ENCODE measurements at regions of chr3 and their contacts with region 1.

Region 1: DNA sequence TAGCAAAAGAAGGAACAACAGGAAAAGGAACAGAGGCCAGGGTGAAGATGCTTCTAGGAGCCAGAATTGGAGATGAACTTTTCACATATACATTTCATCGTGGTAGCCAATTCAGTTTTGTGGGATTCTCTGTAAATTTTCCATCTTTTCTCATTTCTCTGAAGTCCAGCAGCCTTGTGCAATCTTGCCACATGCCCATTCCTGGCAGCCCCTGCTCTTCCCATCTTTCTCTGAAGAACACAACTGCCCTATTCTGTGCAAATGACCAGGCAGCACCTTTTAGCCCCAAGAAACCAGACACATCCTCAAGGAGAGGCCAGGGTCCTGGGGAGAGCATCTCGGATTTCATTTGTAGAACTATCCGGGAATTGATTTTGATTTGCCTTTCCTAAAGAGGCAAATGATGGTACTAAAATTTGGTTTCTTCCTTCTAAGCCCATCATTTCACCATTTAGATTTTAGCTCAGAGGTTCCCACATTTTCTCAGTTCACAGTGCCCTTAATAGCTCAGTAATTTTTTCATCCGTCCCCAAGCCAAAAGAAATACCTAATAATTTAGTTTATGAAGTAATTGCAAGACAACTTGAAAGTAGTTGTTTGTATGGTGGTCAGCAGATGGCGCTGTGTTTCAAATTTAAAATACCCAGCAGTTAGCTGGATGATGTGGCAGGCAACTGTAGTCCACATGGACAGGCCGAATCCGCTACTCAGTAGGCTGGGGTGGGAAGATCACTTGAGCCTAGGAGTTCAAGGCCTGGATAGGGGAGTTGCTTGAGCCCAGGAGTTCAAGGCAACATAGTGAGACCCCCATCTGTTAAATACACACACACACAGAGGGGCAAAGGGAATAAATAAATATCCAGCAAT is 61.3 kb upstream of the ACKR4 start:
- DNase-seq: peak; percentile 80
- ATAC-seq: peak; percentile 64
- H3K4me3 Mint-ChIP-seq: no peak overlapping the region
- H3K27ac Mint-ChIP-seq: peak overlapping the region; percentile 81
- H3K4me1 Mint-ChIP-seq: peaks cover 13% of the 10 kb centered on the region
- H3K27me3 Mint-ChIP-seq: no peaks in the 10 kb centered on the region
- CTCF ChIP-seq: peak; percentile 71

Region 2: GRCh38 chr3:132522353-132522752 is 13.5 kb before region 1 on chr3:
- CTCF ChIA-PET with region 1: interaction called, 22 read pairs
- POLR2A ChIA-PET with region 1: no interaction called
- intact Hi-C with region 1: no loop called
- DNase-seq: no peak
- ATAC-seq: peak; percentile 67
- H3K4me3 Mint-ChIP-seq: no peak overlapping the region
- H3K27ac Mint-ChIP-seq: no peak overlapping the region
- H3K4me1 Mint-ChIP-seq: peaks cover 20% of the 10 kb centered on the region
- H3K27me3 Mint-ChIP-seq: no peaks in the 10 kb centered on the region
- CTCF ChIP-seq: no peak

Region 3: DNA sequence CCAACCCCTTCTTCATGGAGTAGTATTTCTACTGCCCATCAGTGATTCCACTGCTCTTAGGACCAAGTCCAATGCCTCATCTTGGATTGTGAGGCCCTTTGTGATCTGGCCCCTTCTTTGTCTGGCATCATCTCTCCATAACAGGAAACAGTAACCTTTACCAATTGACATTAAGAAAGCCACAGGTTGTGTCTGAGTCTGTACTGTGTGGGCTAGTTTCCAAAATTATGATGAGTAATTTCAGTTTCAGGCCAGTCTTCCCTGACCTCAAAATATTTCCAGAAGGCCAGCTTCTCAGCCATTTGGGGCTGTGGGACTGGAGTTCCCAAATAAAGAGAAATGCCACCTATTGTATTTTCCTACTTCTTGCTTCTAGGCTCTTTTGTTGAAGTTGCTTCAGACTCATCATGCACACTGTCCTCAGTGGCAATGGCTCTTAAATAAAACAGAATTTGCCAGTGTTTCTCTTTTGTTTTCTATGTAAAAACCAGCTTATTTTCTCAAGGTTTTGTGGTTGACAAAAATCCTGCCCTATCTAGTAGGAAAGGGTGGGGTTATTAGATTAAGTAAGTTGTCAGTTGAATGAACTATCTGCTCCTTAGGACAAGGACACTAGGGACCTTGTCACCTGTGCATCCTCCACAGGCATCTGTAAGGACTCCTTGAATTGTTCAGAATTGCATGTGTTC is 14.2 kb after region 1 on chr3:
- CTCF ChIA-PET with region 1: interaction called, 76 read pairs
- POLR2A ChIA-PET with region 1: interaction called, 3 read pairs
- intact Hi-C with region 1: no loop called
- DNase-seq: peak; percentile 24
- ATAC-seq: peak; percentile 93
- H3K4me3 Mint-ChIP-seq: peak overlapping the region; percentile 26
- H3K27ac Mint-ChIP-seq: peak overlapping the region; percentile 97
- H3K4me1 Mint-ChIP-seq: peaks cover 53% of the 10 kb centered on the region
- H3K27me3 Mint-ChIP-seq: no peaks in the 10 kb centered on the region
- CTCF ChIP-seq: no peak

Region 4: GRCh38 chr3:132635052-132635451 is 99.2 kb after region 1 on chr3:
- CTCF ChIA-PET with region 1: interaction called, 130 read pairs
- POLR2A ChIA-PET with region 1: no interaction called
- intact Hi-C with region 1: no loop called
- DNase-seq: no peak
- ATAC-seq: no peak
- H3K4me3 Mint-ChIP-seq: no peak overlapping the region
- H3K27ac Mint-ChIP-seq: no peak overlapping the region
- H3K4me1 Mint-ChIP-seq: peaks cover 4% of the 10 kb centered on the region
- H3K27me3 Mint-ChIP-seq: no peaks in the 10 kb centered on the region
- CTCF ChIP-seq: no peak

Measured in activated CD8-positive, alpha-beta T cell treated with anti-CD3 and anti-CD28 coated beads for 36 hours (primary cell).